Activated T-helper 1 cell treated with anti-CD3 and anti-CD28 coated beads, Interleukin-12 subunit alpha, Interleukin-12 subunit beta, Interleukin-2, Interleukin-4 antibody, amounts not matched to agents 30 ng/mL and 10 ng/mL and 1 ng/mL, durations not matched to agents 14 hours and 24 hours and 36 hours (primary cell): ENCODE measurements at regions of chr6 and their contacts with region 1.

Region 1: DNA sequence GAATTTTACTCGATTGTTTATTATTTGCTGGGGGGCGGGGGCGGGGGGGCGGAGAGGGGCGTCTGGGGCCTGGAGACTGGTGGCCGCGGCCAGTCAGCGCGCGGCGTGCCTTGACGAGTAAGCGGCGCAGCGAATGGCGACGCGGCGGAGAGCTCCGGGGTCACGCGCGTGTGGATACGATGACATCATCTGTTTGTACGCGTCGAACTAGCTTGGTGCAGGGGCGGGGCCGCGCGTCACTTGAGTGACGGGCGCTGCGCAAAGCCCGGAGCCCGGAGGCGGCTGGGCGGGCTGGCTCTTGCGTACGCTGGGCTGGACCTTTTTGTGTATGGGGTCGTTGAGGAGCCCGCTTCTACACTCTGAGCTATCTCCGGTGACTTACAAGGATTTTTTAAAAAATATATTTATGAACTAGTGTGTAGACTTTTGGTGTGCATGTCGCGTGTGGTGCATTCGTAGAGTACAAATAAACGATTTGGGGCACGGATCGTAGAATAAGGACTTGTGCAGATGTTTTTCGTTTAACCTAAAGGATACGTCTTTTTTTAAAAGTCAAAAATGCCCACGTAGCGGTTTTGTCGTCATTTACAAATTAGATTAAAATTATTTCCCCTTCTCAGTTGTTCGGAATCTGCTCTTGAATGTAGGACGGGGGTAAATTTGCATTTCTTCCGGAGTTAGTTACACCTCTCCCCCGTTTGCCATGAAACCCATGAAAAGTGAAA is 2.2 kb upstream of the FOXO3 start:
- DNase-seq: peak; percentile 95
- H3K4me3 Mint-ChIP-seq: peak overlapping the region; percentile 88
- H3K27ac Mint-ChIP-seq: peak overlapping the region; percentile 91
- H3K4me1 Mint-ChIP-seq: peaks cover 32% of the 10 kb centered on the region
- H3K27me3 Mint-ChIP-seq: peaks cover 47% of the 10 kb centered on the region

Region 2: GRCh38 chr6:108294727-108295625 is 263.6 kb before region 1 on chr6 and contains the start of gene AFG1L:
- intact Hi-C with region 1: loop called (anchors 1 kb)
- DNase-seq: peak; percentile 82
- H3K4me3 Mint-ChIP-seq: peak within 1 kb of the TSS; percentile 100
- H3K27ac Mint-ChIP-seq: peak within 1 kb of the TSS; percentile 100
- H3K4me1 Mint-ChIP-seq: peaks cover 26% of the 10 kb centered on the region
- H3K27me3 Mint-ChIP-seq: peaks cover 2% of the 10 kb centered on the region
- total RNA-seq, gene AFG1L: 4.3 and 6.0 TPM in 2 replicates

Region 3: GRCh38 chr6:108518714-108519576 is 39.6 kb before region 1 on chr6:
- intact Hi-C with region 1: no loop called
- DNase-seq: no peak
- H3K4me3 Mint-ChIP-seq: no peak overlapping the region
- H3K27ac Mint-ChIP-seq: no peak overlapping the region
- H3K4me1 Mint-ChIP-seq: no peaks in the 10 kb centered on the region
- H3K27me3 Mint-ChIP-seq: peaks cover 16% of the 10 kb centered on the region

Region 4: GRCh38 chr6:108673602-108674001 is 115.1 kb after region 1 on chr6:
- intact Hi-C with region 1: no loop called
- DNase-seq: no peak
- H3K4me3 Mint-ChIP-seq: no peak overlapping the region
- H3K27ac Mint-ChIP-seq: no peak overlapping the region
- H3K4me1 Mint-ChIP-seq: peaks cover 4% of the 10 kb centered on the region
- H3K27me3 Mint-ChIP-seq: peaks cover 4% of the 10 kb centered on the region

Region 5: DNA sequence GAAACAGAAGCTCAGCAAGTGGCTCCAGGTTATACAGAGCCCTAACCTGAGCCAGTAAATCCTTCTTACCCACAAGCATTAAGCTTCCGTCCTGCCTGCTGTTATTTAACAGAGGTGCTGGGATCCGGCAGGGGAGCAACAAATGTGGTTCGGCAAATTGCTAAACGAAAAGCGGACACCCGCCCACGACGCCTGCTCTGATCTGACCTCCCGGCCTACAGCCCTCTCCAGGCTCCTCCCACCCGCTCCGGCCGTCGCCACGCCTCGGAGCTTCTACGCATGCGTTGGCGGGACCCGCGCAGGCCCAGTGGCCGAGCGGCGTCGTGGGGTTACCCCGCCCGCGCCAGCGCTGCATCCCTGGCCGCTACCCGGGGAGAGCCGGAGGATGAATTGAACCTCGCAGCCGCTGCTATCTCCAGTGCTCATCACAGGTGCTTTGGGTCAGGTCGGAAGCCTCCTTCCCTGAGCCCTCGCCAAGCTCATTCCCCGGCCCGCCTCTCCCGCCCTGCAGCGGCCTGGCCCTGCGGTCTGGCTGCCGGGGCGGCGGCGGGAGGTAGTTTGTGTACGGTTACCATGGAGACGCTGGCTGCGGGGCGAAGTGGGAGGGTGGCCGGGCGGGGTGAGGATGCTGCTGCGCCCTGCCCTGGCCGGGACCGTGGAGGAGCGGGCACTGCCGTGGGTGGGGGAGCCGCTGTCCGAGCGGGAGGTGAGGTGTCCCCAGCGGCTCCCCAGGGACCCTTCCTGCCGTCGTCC is 289.8 kb after region 1 on chr6 and contains the start of gene ARMC2:
- intact Hi-C with region 1: loop called (anchors 1 kb)
- DNase-seq: peak; percentile 88
- H3K4me3 Mint-ChIP-seq: peak within 1 kb of the TSS; percentile 89
- H3K27ac Mint-ChIP-seq: peak within 1 kb of the TSS; percentile 71
- H3K4me1 Mint-ChIP-seq: peaks cover 31% of the 10 kb centered on the region
- H3K27me3 Mint-ChIP-seq: peaks cover 25% of the 10 kb centered on the region
- total RNA-seq, gene ARMC2: 3.9 and 4.6 TPM in 2 replicates

Region 6: GRCh38 chr6:108947114-108947854 is 388.8 kb after region 1 on chr6:
- intact Hi-C with region 1: loop called (anchors 5 kb)
- DNase-seq: no peak
- H3K4me3 Mint-ChIP-seq: peak overlapping the region; percentile 53
- H3K27ac Mint-ChIP-seq: peak overlapping the region; percentile 91
- H3K4me1 Mint-ChIP-seq: peaks cover 54% of the 10 kb centered on the region
- H3K27me3 Mint-ChIP-seq: peaks cover 7% of the 10 kb centered on the region

Region 7: GRCh38 chr6:108983151-108983550 is 424.6 kb after region 1 on chr6:
- intact Hi-C with region 1: no loop called
- DNase-seq: no peak
- H3K4me3 Mint-ChIP-seq: no peak overlapping the region
- H3K27ac Mint-ChIP-seq: no peak overlapping the region
- H3K4me1 Mint-ChIP-seq: peaks cover 4% of the 10 kb centered on the region
- H3K27me3 Mint-ChIP-seq: peaks cover 10% of the 10 kb centered on the region

Region 8: GRCh38 chr6:109482905-109483735 is 924.6 kb after region 1 on chr6 and contains the start of gene ZBTB24:
- intact Hi-C with region 1: loop called (anchors 2 kb)
- DNase-seq: peak; percentile 87
- H3K4me3 Mint-ChIP-seq: peak within 1 kb of the TSS; percentile 98
- H3K27ac Mint-ChIP-seq: peak within 1 kb of the TSS; percentile 92
- H3K4me1 Mint-ChIP-seq: peaks cover 47% of the 10 kb centered on the region
- H3K27me3 Mint-ChIP-seq: peaks cover 1% of the 10 kb centered on the region
- total RNA-seq, gene ZBTB24: 19.5 and 20.8 TPM in 2 replicates